Activated naive CD4-positive, alpha-beta T cell treated with anti-CD3 and anti-CD28 coated beads, Interleukin-2, amount 10 ng/mL, durations not matched to agents 7 days and 5 days (primary cell): ENCODE measurements at regions of chr22 and their contacts with region 1.

Region 1: DNA sequence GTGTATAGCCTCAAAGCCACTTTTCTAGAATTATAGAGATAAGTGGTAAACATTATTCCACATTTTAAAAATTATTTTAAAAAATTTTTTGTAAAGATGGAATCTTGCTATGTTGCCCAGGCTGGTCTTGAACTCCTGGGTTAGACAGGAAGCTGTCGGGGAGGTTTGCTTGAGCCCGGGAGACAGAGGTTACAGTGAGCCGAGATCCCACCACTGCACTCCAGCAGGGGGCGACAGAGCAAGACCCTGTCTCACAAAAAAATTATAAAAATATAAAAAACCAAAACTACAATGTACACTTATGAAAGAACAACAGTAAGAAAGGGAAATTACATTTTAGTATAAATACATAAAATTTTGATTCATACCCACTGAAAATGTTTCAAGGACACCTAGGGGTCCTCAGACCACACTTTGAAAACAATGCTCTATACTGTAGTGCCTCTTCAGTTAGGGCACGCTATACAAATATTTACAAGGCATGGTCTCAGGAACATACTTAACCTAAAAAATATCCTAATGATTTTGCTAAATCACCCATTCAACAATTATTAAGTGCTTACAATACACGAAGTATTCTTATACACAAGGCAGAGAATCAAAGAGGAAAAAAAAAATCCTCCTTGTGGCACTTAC is 111.2 kb downstream of the MRTFA start:
- DNase-seq: peak; percentile 81
- H3K4me3 Mint-ChIP-seq: no peak overlapping the region
- H3K27ac Mint-ChIP-seq: no peak overlapping the region
- H3K4me1 Mint-ChIP-seq: peaks cover 20% of the 10 kb centered on the region
- H3K27me3 Mint-ChIP-seq: no peaks in the 10 kb centered on the region

Region 2: GRCh38 chr22:40449676-40450035 is 75.7 kb before region 1 on chr22:
- CTCF ChIA-PET with region 1: no interaction called
- DNase-seq: no peak
- H3K4me3 Mint-ChIP-seq: no peak overlapping the region
- H3K27ac Mint-ChIP-seq: no peak overlapping the region
- H3K4me1 Mint-ChIP-seq: peaks cover 50% of the 10 kb centered on the region
- H3K27me3 Mint-ChIP-seq: no peaks in the 10 kb centered on the region

Region 3: GRCh38 chr22:40636380-40637182 is 111.2 kb after region 1 on chr22 and contains the start of gene MRTFA:
- CTCF ChIA-PET with region 1: interaction called, 127 read pairs
- DNase-seq: peak; percentile 100
- H3K4me3 Mint-ChIP-seq: peak within 1 kb of the TSS; percentile 93
- H3K27ac Mint-ChIP-seq: peak within 1 kb of the TSS; percentile 97
- H3K4me1 Mint-ChIP-seq: peaks cover 47% of the 10 kb centered on the region
- H3K27me3 Mint-ChIP-seq: no peaks in the 10 kb centered on the region

Region 4: DNA sequence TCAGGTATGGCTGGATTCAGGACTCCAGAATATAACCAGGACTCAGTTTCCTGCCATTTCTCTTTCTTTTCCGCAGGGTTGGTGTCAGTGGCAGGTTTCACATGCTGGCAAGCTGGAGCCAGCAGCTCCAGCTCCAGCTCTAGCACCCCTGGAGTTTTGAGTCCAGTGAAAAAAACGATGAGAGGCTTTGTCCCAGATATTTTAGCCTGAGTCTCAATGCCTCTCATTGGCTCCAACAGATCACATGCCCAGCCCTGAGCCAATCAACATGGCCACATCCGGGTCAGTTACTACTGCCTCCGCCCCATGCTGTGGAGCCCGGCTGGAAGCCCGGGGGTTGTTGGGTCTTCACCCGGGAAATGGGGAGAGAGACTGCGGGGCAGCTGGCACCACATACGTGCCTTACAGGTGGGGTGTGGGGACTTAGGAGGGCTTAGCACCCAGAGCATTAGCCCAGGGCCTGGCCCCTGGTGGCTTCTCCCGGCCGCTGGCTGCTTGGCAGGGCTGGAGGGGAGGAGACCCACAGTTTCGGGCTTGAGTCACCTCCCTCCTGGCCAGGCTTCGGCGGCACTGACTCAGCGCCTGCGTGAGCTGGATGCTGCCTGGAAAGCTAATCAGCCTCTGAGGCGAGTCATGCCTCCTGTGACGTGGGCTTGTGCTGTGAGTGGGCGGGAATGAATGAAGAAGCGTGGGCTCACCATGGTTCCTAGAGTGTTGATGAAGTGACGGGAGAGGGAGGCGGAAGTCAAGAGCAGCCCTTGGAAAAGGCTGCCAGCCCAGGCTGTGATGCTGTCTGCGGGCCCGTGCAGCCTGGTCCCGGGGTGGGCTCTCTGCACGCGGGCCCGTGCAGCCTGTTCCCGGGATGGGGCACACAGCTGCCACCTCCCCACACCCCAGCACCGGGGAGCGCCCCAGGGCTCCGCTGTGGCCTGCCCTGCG is 126.5 kb after region 1 on chr22:
- CTCF ChIA-PET with region 1: interaction called, 127 read pairs
- DNase-seq: peak; percentile 65
- H3K4me3 Mint-ChIP-seq: peak overlapping the region; percentile 62
- H3K27ac Mint-ChIP-seq: peak overlapping the region; percentile 47
- H3K4me1 Mint-ChIP-seq: peaks cover 17% of the 10 kb centered on the region
- H3K27me3 Mint-ChIP-seq: peaks cover 6% of the 10 kb centered on the region